Activated naive CD4-positive, alpha-beta T cell treated with anti-CD3 and anti-CD28 coated beads, Interleukin-2, amount 10 ng/mL, durations not matched to agents 7 days and 5 days (primary cell): ENCODE measurements at regions of chr1 and their contacts with region 1.

Region 1: DNA sequence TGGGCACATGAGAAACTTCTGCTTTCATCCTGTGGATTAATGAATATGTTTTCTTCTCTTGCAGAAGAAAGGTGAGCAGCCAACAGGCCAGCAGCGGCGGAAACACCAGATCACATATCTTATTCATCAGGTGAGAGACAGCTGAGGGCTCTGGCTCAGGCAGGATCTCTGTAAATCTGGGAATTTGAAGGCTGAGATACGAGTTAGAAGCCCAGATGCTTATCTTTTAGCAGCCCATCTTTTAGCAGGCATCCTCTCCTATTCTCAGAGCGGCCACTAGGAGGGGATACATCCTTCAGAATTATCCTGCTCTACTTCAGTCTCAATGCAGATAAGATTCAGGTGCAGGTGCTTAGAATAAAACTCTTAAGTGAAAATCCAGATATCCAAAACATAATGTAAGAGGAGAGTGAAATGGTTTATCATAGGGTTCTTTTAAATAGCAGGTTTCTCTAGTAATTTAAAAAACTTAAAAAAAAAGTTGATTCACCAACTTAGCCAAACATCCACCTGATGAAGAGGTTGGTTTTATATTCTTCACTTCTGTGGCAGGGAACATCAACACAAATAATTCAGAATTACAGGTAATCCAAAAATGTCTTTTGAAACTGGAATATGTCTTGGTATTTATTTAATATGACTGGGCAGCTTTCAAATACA is 19.3 kb downstream of the SH2D2A start:
- DNase-seq: peak; percentile 79
- H3K4me3 Mint-ChIP-seq: no peak overlapping the region
- H3K27ac Mint-ChIP-seq: no peak overlapping the region
- H3K4me1 Mint-ChIP-seq: peaks cover 9% of the 10 kb centered on the region
- H3K27me3 Mint-ChIP-seq: no peaks in the 10 kb centered on the region

Region 2: DNA sequence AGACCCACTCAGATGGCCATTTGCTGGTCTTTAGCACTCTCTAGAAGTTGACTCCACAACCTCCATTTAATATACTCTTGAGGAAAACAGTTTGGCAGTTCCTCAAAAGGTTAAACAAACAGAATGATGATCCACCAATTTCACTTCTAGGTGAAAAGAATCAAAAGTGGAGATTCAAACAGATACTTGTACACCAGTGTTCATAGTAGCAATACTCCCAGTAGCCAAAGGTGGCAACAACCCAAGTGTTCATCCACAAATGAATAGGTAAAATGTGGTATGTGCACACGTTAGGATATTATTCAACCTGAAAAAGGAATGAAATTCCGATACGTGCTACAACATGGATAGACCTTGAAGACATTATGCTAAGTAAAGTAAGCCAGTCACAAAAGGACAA is 23.7 kb before region 1 on chr1:
- CTCF ChIA-PET with region 1: interaction called, 23 read pairs
- DNase-seq: no peak
- H3K4me3 Mint-ChIP-seq: no peak overlapping the region
- H3K27ac Mint-ChIP-seq: no peak overlapping the region
- H3K4me1 Mint-ChIP-seq: peaks cover 63% of the 10 kb centered on the region
- H3K27me3 Mint-ChIP-seq: no peaks in the 10 kb centered on the region